H1 (cell line): ENCODE measurements at regions of chr19 and their contacts with region 1.

Region 1: DNA sequence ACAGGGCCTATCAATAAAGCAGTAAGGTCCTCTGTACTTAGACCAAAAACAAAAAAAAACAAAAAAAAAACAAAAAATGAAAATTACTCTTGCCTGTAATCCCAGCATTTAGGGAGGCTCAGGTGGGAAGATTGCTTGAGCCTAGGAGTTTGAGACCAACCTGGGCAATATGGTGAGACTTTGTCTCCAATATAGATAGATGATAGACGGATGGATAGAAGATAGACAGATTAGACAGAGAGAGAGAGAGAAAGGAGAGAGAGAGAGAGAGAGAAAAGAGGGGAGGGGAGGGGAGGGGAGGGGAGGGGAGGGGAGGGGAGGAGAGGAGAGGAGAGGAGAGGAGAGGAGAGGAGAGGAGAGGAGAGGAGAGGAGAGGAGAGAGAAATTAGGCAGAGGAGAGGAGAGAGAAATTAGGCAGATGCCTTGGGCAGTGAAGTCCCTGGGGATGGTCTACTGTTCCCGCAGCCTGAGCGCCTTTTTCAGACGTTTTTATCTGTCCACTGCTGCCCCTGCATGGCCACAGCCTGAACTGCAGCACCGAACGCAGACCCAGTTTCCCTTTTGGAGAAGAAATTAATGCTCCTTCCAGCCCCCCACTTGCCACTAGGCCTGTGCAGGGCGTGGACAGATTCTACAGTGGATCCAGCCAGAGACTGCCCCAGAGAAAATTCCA is 9.8 kb upstream of the ZNF627 start:
- DNase-seq: peak; percentile 33 to 97
- H3K4me3 ChIP-seq: no peak overlapping the region
- H3K27ac ChIP-seq: no peak overlapping the region
- H3K4me1 ChIP-seq: no peaks in the 10 kb centered on the region
- H3K27me3 ChIP-seq: no peaks in the 10 kb centered on the region; a peak in 1 of 7 replicates
- CTCF ChIP-seq: peak; percentile 87 to 90 (median 89)
- EP300 ChIP-seq: no peak
- POLR2A ChIP-seq: no peak
- RAD21 ChIP-seq: peak; percentile 87 to 89

Region 2: GRCh38 chr19:11405846-11406643 is 181.4 kb before region 1 on chr19:
- CTCF ChIA-PET with region 1: no interaction called
- POLR2A ChIA-PET with region 1: no interaction called
- DNase-seq: peak in 1 of 2 experiments; percentile 87
- H3K4me3 ChIP-seq: peak overlapping the region in 1 of 4 experiments; percentile 47; a peak in 2 of 8 replicates
- H3K27ac ChIP-seq: 0 out of 2 replicates have a peak overlapping the region, but pooled peaks have one; percentile 49
- H3K4me1 ChIP-seq: peaks cover 0 to 6% (median under 1%) of the 10 kb centered on the region in 4 experiments; a peak in 4 of 7 replicates
- H3K27me3 ChIP-seq: no peaks in the 10 kb centered on the region
- CTCF ChIP-seq: peak; percentile 57 to 69 (median 63)
- EP300 ChIP-seq: no peak
- POLR2A ChIP-seq: no peak
- RAD21 ChIP-seq: peak; percentile 48 to 69; a peak in 3 of 4 replicates

Region 3: DNA sequence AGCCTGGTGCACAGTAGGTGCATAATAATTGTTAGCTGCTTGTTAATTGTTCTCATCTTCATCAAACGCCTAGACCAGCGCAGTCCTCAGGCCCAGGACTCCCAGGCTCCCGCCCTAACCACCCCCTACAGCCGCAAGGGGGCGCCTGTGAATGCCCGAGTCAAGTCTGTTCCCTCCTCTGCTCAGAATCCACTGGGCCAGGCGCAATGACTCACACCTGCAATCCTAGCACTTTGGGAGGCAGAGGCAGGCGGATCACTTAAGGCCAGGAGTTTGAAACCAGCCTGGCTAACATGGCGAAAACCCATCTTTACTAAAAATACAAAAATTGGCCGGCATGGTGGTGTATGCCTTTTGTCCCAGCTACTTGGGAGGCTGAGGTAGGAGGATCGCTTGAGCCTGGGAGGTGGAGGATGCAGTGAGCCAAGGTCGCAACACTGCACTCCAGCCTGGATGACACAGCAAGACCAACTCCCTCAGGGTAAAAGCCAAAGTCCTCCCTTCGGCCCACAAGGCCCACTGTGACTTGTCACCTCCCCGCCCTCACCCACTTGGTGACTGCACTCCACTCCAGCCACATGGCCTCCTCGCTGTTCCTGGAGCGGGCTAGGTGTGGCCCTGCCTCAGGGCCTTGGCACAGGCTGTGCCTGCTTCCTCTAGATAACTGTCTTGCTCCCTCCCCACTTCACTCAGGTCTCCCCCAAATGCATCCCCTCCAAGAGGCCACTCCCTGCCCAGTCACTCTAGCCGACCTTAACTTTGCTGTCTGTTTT is 90.9 kb before region 1 on chr19:
- CTCF ChIA-PET with region 1: interaction called, 12 read pairs
- POLR2A ChIA-PET with region 1: no interaction called
- DNase-seq: peak; percentile 57 to 96
- H3K4me3 ChIP-seq: no peak overlapping the region
- H3K27ac ChIP-seq: no peak overlapping the region
- H3K4me1 ChIP-seq: no peaks in the 10 kb centered on the region
- H3K27me3 ChIP-seq: no peaks in the 10 kb centered on the region
- CTCF ChIP-seq: peak; percentile 85 to 91 (median 89)
- EP300 ChIP-seq: no peak
- POLR2A ChIP-seq: no peak
- RAD21 ChIP-seq: peak; percentile 62 to 76